Calu3 (cell line): ENCODE measurements at regions of chr9 and their contacts with region 1.

Region 1: GRCh38 chr9:115013998-115014397 is 83.6 kb upstream of the TNFSF8 start:
- DNase-seq: peak; percentile 61
- H3K4me3 Mint-ChIP-seq: no peak overlapping the region
- H3K27ac Mint-ChIP-seq: no peak overlapping the region
- H3K4me1 Mint-ChIP-seq: no peaks in the 10 kb centered on the region
- H3K27me3 Mint-ChIP-seq: peaks cover 46% of the 10 kb centered on the region
- CTCF ChIP-seq: peak; percentile 50

Region 2: DNA sequence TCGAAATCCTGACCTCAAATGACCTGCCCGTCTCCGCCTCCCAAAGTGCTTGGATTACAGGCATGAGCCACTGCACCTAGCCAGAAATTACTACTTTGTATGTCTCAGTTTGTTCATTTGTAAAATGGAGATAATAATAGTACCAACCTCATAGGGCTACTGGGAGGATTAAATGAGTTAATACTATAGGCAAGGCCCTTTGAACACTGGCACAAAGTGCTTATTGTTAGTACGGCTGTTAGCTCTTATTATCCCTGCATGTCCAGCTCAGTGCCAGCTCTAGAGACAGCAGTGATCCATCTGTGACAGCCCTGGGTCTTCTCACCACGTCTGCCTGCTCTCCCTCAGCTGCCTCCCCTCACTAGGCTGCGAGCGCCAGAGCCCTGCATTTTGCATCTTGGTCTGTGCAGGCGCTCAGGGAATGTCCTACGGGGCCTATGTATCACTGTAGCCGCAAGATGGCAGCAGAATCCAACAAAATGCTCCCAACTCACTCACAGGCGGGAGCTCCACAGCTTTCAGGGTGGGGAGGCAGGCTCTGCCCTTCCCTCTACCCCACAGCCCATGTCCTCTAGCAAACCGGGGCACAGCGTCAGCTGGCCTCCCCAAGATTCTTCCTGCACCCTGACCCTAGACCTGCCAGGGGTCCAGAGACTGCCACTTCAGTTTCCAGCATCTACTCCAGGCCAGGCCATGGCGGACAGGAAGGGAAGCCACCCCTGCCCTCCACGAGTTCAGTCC is 608.5 kb before region 1 on chr9:
- CTCF ChIA-PET with region 1: no interaction called
- intact Hi-C with region 1: loop called (anchors 10 kb)
- DNase-seq: peak; percentile 68
- H3K4me3 Mint-ChIP-seq: no peak overlapping the region
- H3K27ac Mint-ChIP-seq: no peak overlapping the region
- H3K4me1 Mint-ChIP-seq: no peaks in the 10 kb centered on the region
- H3K27me3 Mint-ChIP-seq: peaks cover 33% of the 10 kb centered on the region
- CTCF ChIP-seq: peak; percentile 55

Region 3: DNA sequence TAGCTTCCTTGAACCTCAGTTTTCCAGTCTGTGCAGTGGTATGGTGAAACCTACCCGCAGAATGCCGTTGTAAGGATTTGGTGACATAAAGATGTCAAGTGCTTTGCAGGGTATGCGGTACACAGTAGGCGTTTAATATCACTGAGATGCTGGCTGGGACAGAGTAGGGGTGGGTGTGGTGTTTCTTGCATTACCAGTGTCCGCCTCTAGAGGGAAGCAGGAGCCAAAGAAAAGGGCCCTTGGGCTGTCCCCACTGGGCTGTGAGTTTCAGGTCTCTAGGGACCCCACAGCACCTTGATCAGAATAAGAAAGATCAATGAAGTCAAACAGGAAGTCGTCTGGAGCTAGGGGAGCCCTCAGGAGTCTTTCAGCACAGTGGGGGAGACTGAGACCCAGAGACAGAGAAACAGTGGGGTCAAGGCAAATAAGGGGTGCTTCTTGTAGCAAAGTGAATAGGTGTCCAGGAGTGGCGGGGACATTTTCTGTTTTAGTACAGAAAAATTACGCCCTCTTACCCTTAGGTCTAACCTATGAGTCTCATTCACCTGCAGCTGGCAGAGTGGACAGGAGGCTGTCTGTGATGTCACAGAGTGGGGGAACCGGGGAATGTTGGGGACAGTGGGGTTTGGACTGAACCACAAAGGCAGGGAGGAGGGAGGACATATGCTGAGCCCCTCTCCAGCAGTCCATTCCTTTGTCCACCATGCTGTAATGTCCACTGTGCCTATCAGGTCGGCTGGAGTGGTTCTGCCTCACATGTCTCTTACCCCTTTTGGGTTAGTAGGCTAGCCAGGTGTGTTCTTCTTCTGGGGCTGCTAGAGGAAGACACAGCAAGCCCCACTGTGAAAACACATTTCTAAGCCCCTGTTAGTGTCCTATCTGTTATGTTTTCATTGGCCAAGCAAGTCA is 351.7 kb before region 1 on chr9:
- CTCF ChIA-PET with region 1: no interaction called
- intact Hi-C with region 1: loop called (anchors 1 kb)
- DNase-seq: peak; percentile 64
- H3K4me3 Mint-ChIP-seq: no peak overlapping the region
- H3K27ac Mint-ChIP-seq: no peak overlapping the region
- H3K4me1 Mint-ChIP-seq: no peaks in the 10 kb centered on the region
- H3K27me3 Mint-ChIP-seq: peaks cover 15% of the 10 kb centered on the region
- CTCF ChIP-seq: peak; percentile 75

Region 4: DNA sequence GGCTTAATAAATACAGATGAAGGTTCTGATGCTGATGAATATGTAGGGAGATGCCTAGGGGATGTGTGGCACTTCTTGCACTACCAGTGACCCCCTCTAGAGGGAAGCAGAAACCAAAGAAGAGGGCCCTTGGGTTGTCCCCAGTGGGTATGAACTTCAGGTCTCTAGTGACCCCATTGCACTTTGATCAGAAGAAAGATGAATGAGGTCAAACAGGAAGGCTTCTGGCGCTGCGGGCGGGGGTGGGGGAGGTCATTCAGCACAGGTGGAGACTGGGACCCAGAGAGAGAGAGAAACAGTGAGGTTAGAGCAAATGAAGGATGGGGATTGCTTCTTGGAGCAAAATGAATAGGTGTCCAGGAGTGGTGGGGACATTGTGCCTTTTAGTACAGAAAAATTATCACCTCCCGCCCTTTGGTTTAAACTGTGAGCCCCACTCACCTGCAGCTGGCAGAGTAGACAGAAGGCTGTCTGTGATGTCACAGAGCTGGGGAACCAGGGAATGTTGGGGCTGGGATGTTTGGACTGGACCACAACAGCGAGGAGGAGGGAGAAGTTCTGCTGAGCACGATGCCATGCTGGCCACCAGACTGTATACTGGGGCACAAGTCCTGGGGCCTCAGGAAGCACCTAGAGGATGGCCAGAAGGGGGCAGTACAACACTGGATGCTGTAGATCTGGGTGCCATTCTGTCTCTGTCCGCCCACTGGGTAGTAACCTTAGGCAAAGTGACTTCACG is 332.2 kb before region 1 on chr9 and contains the start of gene TEX48:
- CTCF ChIA-PET with region 1: no interaction called
- intact Hi-C with region 1: loop called (anchors 1 kb)
- DNase-seq: peak; percentile 63
- H3K4me3 Mint-ChIP-seq: no peak within 1 kb of the TSS
- H3K27ac Mint-ChIP-seq: peak within 1 kb of the TSS; percentile 48
- H3K4me1 Mint-ChIP-seq: peaks cover 35% of the 10 kb centered on the region
- H3K27me3 Mint-ChIP-seq: no peaks in the 10 kb centered on the region
- CTCF ChIP-seq: peak; percentile 66
- total RNA-seq, gene TEX48: not detected in 2 replicates

Region 5: DNA sequence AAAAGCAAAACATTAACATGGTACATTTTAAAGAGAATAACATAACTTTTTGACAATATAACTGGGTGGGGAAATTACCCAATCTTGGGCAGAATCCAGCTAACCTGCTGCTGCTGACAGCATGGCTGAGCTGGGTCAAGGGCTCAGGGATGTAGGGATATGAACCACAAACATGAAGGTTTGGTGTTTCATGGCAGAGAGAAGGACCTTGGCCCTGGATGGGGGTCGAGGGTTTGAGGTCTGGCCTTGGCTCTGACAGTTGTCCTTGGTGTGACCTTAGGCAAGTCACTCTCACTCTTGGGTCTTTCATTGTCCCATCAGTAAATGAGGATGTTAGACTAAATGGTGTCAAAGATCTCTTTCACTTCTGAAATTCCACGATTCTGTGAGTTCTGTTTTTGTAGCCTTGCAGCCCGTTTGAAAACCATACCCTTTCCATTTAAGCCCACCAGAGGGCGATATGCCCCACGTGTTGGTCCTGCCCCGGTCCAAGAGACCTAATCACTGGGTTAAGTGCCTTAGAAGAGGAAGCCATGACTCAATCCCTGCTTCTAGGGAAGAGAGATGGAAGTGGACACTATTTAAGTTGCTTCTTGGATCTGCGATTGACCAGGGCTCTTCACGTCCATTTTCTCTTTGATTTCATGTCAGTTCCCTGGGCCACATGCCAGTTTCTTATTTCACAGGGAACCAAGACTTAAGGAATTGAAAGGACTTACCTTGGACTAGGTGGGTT is 275.2 kb before region 1 on chr9:
- CTCF ChIA-PET with region 1: no interaction called
- intact Hi-C with region 1: loop called (anchors 1 kb)
- DNase-seq: peak; percentile 69
- H3K4me3 Mint-ChIP-seq: no peak overlapping the region
- H3K27ac Mint-ChIP-seq: no peak overlapping the region
- H3K4me1 Mint-ChIP-seq: no peaks in the 10 kb centered on the region
- H3K27me3 Mint-ChIP-seq: no peaks in the 10 kb centered on the region
- CTCF ChIP-seq: peak; percentile 60